ENCODE measurements at regions of chr7 and their contacts with region 1.

Region 1: GRCh38 chr7:130982160-130982638 is 248.2 kb upstream of the KLF14 start:
- DNase-seq: peak; percentile 62 to 70 (median 64)
- H3K4me3 ChIP-seq: no peak overlapping the region
- H3K4me3 Mint-ChIP-seq: no peak overlapping the region
- H3K27ac ChIP-seq: peak overlapping the region; percentile 50
- H3K27ac Mint-ChIP-seq: no peak overlapping the region
- H3K4me1 ChIP-seq: peaks cover 77% of the 10 kb centered on the region
- H3K4me1 Mint-ChIP-seq: peaks cover 24 to 48% (median 38%) of the 10 kb centered on the region in 4 donors
- H3K27me3 ChIP-seq: no peaks in the 10 kb centered on the region
- H3K27me3 Mint-ChIP-seq: no peaks in the 10 kb centered on the region

Region 2: GRCh38 chr7:130822642-130823041 is 159.6 kb before region 1 on chr7:
- CTCF ChIA-PET with region 1: no interaction called
- POLR2A ChIA-PET with region 1: no interaction called
- intact Hi-C with region 1: no loop called
- DNase-seq: no peak
- H3K4me3 ChIP-seq: no peak overlapping the region
- H3K4me3 Mint-ChIP-seq: no peak overlapping the region
- H3K27ac ChIP-seq: no peak overlapping the region
- H3K27ac Mint-ChIP-seq: no peak overlapping the region
- H3K4me1 ChIP-seq: no peaks in the 10 kb centered on the region
- H3K4me1 Mint-ChIP-seq: no peaks in the 10 kb centered on the region
- H3K27me3 ChIP-seq: no peaks in the 10 kb centered on the region
- H3K27me3 Mint-ChIP-seq: peaks cover 3 to 4% of the 10 kb centered on the region in 2 donors

Region 3: DNA sequence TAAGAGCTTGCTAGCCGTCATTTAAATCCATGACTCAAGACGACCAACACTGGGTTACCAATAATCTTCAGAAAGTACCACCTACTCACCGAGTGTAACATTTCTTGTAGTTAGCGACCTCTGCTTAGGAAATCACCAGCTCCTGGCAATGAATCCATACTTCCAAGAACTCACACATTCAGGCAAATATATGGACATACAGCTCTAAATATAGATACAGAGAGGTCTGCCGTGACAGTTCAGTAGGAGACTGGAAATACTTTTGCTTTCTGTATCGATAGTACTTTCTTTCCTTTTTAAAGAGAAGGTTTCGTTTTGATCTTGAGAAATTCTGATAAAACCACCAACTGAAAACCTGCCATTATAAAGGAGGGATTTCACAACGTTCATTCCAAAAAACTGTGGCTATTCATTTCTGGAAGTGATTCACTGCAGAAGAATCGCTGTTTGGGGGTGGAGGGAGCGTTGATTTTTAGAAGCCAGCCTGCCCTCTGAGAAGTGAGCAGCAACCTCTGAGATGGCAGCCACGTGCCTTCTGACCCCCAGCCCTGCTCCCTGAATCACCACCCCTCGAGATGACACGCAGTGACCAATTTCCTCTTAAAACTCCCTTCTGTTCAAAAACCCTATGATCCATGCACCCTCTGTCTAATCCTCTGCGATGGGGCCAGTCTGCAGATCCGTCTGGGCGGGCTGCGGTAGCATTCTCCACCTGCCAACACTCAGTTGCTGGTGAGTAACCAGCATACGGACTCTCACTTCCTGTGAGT is 69.2 kb before region 1 on chr7:
- CTCF ChIA-PET with region 1: interaction called, 14 read pairs
- POLR2A ChIA-PET with region 1: interaction called, 4 read pairs
- intact Hi-C with region 1: no loop called
- DNase-seq: peak; percentile 80 to 98 (median 85)
- H3K4me3 ChIP-seq: peak overlapping the region; percentile 77 to 86
- H3K4me3 Mint-ChIP-seq: peak overlapping the region; percentile 82 to 98 (median 92)
- H3K27ac ChIP-seq: peak overlapping the region; percentile 96
- H3K27ac Mint-ChIP-seq: peak overlapping the region in 6 of 7 donors; percentile 93 to 99 (median 98)
- H3K4me1 ChIP-seq: peaks cover 86% of the 10 kb centered on the region
- H3K4me1 Mint-ChIP-seq: peaks cover 78 to 97% (median 89%) of the 10 kb centered on the region in 4 donors
- H3K27me3 ChIP-seq: no peaks in the 10 kb centered on the region
- H3K27me3 Mint-ChIP-seq: no peaks in the 10 kb centered on the region

Region 4: GRCh38 chr7:130961128-130961601 is 21.0 kb before region 1 on chr7:
- CTCF ChIA-PET with region 1: interaction called, 28 read pairs
- POLR2A ChIA-PET with region 1: interaction called, 6 read pairs
- intact Hi-C with region 1: loop called (anchors 1 kb)
- DNase-seq: peak; percentile 83 to 94 (median 90)
- H3K4me3 ChIP-seq: peak overlapping the region; percentile 27 to 60
- H3K4me3 Mint-ChIP-seq: peak overlapping the region; percentile 88 to 97 (median 94)
- H3K27ac ChIP-seq: peak overlapping the region; percentile 93
- H3K27ac Mint-ChIP-seq: peak overlapping the region in 6 of 7 donors; percentile 96 to 100 (median 99)
- H3K4me1 ChIP-seq: peaks cover 71% of the 10 kb centered on the region
- H3K4me1 Mint-ChIP-seq: peaks cover 26 to 75% (median 47%) of the 10 kb centered on the region in 4 donors
- H3K27me3 ChIP-seq: no peaks in the 10 kb centered on the region
- H3K27me3 Mint-ChIP-seq: no peaks in the 10 kb centered on the region

Region 5: GRCh38 chr7:130996841-130997231 is 14.6 kb after region 1 on chr7:
- CTCF ChIA-PET with region 1: interaction called, 43 read pairs
- POLR2A ChIA-PET with region 1: interaction called, 13 read pairs
- intact Hi-C with region 1: loop called (anchors 2 kb)
- DNase-seq: peak in 1 of 5 donors; percentile 62
- H3K4me3 ChIP-seq: no peak overlapping the region
- H3K4me3 Mint-ChIP-seq: peak overlapping the region; percentile 62 to 86 (median 80)
- H3K27ac ChIP-seq: peak overlapping the region; percentile 64
- H3K27ac Mint-ChIP-seq: peak overlapping the region in 6 of 7 donors; percentile 88 to 98 (median 93)
- H3K4me1 ChIP-seq: peaks cover 92% of the 10 kb centered on the region
- H3K4me1 Mint-ChIP-seq: peaks cover 64 to 96% (median 80%) of the 10 kb centered on the region in 4 donors
- H3K27me3 ChIP-seq: no peaks in the 10 kb centered on the region
- H3K27me3 Mint-ChIP-seq: no peaks in the 10 kb centered on the region

Region 6: GRCh38 chr7:131040467-131040932 is 58.3 kb after region 1 on chr7:
- CTCF ChIA-PET with region 1: interaction called, 29 read pairs
- POLR2A ChIA-PET with region 1: no interaction called
- intact Hi-C with region 1: loop called (anchors 1 kb)
- DNase-seq: peak; percentile 61 to 69 (median 65)
- H3K4me3 ChIP-seq: no peak overlapping the region
- H3K4me3 Mint-ChIP-seq: peak overlapping the region in 6 of 8 donors; percentile 25 to 74 (median 42)
- H3K27ac ChIP-seq: peak overlapping the region; percentile 10
- H3K27ac Mint-ChIP-seq: peak overlapping the region; percentile 39 to 81 (median 77)
- H3K4me1 ChIP-seq: peaks cover 49% of the 10 kb centered on the region
- H3K4me1 Mint-ChIP-seq: peaks cover 49 to 77% (median 62%) of the 10 kb centered on the region in 4 donors
- H3K27me3 ChIP-seq: no peaks in the 10 kb centered on the region
- H3K27me3 Mint-ChIP-seq: no peaks in the 10 kb centered on the region

Region 7: GRCh38 chr7:131424219-131424822 is 442.1 kb after region 1 on chr7:
- CTCF ChIA-PET with region 1: interaction called, 3 read pairs
- POLR2A ChIA-PET with region 1: no interaction called
- intact Hi-C with region 1: loop called (anchors 1 kb)
- DNase-seq: peak; percentile 28 to 46 (median 34)
- H3K4me3 ChIP-seq: no peak overlapping the region
- H3K4me3 Mint-ChIP-seq: no peak overlapping the region
- H3K27ac ChIP-seq: no peak overlapping the region
- H3K27ac Mint-ChIP-seq: peak overlapping the region in 3 of 7 donors; percentile 9 to 47 (median 14)
- H3K4me1 ChIP-seq: no peaks in the 10 kb centered on the region
- H3K4me1 Mint-ChIP-seq: peaks cover 3 to 11% (median 6%) of the 10 kb centered on the region in 4 donors
- H3K27me3 ChIP-seq: no peaks in the 10 kb centered on the region
- H3K27me3 Mint-ChIP-seq: no peaks in the 10 kb centered on the region